ENCODE measurements at regions of chr10 and their contacts with region 1.

Region 1: GRCh38 chr10:52644373-52645186 is 128.0 kb downstream of the MBL2 start:
- DNase-seq: peak; percentile 17 to 54
- ATAC-seq: peak; percentile 71 to 77
- H3K4me3 ChIP-seq: no peak overlapping the region
- H3K27ac ChIP-seq: no peak overlapping the region
- H3K4me1 ChIP-seq: no peaks in the 10 kb centered on the region
- CTCF ChIP-seq: peak; percentile 78
- EP300 ChIP-seq: no peak
- POLR2A ChIP-seq: no peak
- RAD21 ChIP-seq: peak; percentile 68 to 81

Region 2: GRCh38 chr10:52586710-52587109 is 57.9 kb before region 1 on chr10:
- CTCF ChIA-PET with region 1: no interaction called
- POLR2A ChIA-PET with region 1: no interaction called
- DNase-seq: no peak
- ATAC-seq: no peak
- H3K4me3 ChIP-seq: no peak overlapping the region
- H3K27ac ChIP-seq: no peak overlapping the region
- H3K4me1 ChIP-seq: no peaks in the 10 kb centered on the region
- CTCF ChIP-seq: no peak
- EP300 ChIP-seq: no peak
- POLR2A ChIP-seq: no peak
- RAD21 ChIP-seq: no peak

Region 3: DNA sequence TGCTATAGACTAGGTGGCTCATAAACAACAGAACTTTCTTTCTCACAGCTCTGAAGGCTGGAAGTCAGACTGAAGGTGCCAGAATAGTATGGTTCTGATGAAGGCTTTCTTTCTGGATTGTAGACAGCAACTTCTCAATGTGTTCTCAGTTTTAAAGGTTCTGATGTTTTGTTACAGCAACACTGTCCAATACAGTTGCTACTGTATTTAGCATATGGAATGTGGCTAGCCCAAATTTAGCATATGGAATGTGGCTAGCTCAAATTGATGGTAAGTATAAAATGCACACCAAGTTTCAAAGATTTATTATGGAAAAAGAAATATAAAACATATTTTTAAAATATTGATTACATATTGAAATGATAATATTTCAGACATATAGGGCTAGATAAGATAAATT is 17.3 kb before region 1 on chr10:
- CTCF ChIA-PET with region 1: interaction called, 12 read pairs
- POLR2A ChIA-PET with region 1: no interaction called
- DNase-seq: no peak
- ATAC-seq: no peak
- H3K4me3 ChIP-seq: no peak overlapping the region
- H3K27ac ChIP-seq: no peak overlapping the region
- H3K4me1 ChIP-seq: no peaks in the 10 kb centered on the region
- CTCF ChIP-seq: no peak
- EP300 ChIP-seq: no peak
- POLR2A ChIP-seq: no peak
- RAD21 ChIP-seq: no peak

Region 4: GRCh38 chr10:52729271-52730104 is 84.9 kb after region 1 on chr10:
- CTCF ChIA-PET with region 1: interaction called, 30 read pairs
- POLR2A ChIA-PET with region 1: no interaction called
- DNase-seq: peak; percentile 35 to 36
- ATAC-seq: peak; percentile 80 to 85; a peak in 5 of 6 replicates
- H3K4me3 ChIP-seq: no peak overlapping the region
- H3K27ac ChIP-seq: no peak overlapping the region
- H3K4me1 ChIP-seq: no peaks in the 10 kb centered on the region
- CTCF ChIP-seq: peak; percentile 68
- EP300 ChIP-seq: no peak
- POLR2A ChIP-seq: no peak
- RAD21 ChIP-seq: peak; percentile 74 to 76

Region 5: DNA sequence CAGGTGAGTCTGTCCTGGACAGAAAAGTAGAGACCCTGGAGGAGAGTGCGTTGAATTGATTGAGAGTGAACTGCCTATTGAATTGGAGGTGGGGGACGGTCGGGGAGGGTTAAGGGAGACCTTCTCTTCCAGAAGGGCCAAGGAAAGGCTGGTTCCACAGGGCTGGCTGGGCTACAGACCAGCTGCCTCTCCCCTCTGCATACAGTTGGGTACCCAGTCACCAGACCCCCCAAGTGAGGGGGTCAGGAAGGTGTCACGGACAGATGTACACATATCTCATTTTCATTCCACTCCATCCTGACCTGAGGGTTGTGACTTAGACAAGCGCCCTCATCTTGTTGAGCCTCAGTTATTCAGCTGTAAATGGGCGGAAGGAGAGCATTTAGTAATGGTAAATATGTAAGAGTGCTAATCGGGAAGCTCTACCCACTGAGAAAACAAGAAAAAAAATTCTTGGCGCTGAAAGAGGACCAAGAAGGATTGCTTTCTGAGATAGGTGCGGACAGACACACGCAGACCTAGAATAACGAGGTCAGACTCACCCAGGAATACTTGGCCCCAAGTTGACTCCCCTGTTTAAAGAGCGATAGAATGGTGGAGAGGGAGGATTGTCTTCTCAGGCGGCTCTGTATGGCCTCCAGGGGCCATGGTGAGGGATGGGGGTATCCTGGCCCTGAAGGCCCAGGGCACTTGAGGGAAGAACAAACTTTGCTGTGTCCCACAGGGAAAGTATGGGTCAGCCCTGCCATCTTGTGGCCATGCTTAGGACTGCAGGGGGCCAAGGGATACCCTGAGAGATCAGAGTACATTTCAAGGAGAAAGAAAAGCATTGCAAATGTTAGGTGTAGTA is 135.2 kb after region 1 on chr10:
- CTCF ChIA-PET with region 1: interaction called, 61 read pairs
- POLR2A ChIA-PET with region 1: no interaction called
- DNase-seq: peak; percentile 60 to 62
- ATAC-seq: peak; percentile 86 to 95
- H3K4me3 ChIP-seq: no peak overlapping the region
- H3K27ac ChIP-seq: no peak overlapping the region
- H3K4me1 ChIP-seq: no peaks in the 10 kb centered on the region
- CTCF ChIP-seq: peak; percentile 86
- EP300 ChIP-seq: no peak
- POLR2A ChIP-seq: no peak
- RAD21 ChIP-seq: peak; percentile 87 to 92